Heart left ventricle (tissue), 16 donors: ENCODE measurements at regions of chr4 and their contacts with region 1.

Region 1: DNA sequence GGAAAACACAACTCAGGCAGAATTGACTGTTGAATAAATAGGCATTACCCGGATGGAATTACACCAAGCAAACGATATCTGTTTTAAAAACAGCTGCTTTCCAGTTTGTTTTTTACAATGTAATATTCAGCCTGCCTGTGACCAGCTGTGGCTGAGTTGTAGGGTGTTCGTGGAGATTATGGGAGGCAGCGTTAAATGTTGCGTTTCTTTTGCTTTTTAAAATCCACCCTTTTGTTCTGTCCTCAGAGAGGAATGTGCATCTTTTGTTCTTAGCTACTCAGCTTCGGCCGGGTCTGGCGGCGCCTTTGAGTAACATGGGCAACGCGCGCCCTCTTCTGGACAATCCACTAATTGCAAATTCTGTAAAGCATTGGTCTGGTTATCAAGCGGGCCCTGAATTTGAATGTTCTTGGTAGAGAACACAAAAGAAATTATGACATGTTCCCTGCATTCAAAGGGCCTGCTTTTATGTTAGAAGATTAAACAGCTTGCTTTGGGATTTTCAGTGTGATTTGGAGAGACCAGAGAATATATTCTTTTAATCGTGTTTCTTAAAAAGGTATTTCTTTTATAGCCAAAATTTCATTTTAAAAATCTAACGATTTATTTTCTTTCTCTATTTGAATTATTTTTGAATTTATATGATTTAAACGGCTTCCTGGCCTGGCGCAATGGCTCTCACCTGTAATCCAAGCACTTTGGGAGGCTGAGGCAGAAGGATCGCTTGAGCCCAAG is 76.3 kb upstream of the TRIM2 start:
- DNase-seq: peak; percentile 75 to 84 (median 81)
- ATAC-seq: peak; percentile 63 to 91 (median 84)
- H3K4me3 ChIP-seq: peak overlapping the region in 2 of 12 donors; percentile 11 to 32
- H3K27ac ChIP-seq: no peak overlapping the region
- H3K4me1 ChIP-seq: peaks cover 0 to 5% (median 0%) of the 10 kb centered on the region in 12 donors
- H3K27me3 ChIP-seq: no peaks in the 10 kb centered on the region
- CTCF ChIP-seq: peak; percentile 74 to 93 (median 84)
- POLR2A ChIP-seq: no peak

Region 2: DNA sequence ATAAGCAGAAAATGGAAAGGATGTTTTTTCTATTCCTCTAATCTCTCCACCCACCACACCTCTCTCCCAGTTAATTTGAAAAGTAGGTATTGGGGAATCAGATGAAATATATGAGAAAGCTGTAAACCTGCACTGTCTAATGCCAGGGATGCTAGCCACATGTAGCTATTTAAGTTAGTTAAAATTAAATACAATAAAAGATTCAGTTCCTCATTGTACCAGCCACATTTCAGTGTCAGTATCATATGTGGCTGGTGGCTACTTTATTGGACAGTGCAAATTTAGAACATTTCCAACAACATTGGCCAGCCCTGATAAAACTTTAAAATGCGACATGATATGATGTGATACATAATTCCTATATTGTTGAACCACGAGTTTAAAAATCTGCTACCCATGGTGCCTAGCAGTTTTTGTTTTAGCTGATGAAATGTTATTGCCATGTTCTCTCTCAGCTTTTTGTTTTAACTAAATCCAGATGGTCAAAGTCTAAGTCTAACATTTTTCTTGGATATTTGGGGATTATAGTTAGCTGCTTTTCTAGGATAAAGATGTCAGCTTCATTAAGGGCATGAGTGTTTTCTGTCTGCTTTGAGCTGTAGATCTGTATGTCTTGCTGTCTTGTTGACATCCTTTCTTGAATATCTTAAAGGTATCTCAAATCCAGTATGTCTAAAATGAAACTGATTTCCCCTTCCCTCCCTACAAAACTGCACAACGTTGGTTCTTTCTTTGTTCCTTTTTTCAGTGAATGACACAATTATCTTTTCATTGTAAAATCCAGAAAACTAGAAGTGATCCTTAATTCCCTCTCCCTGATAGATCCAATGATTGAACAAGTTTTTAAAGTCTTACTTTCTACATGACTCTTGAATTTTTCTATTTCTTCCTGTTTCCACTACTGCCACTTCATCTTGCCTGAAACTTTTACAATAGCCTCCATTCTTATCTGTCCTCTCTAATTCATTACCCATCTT is 342.0 kb before region 1 on chr4:
- intact Hi-C with region 1: no loop called
- DNase-seq: no peak
- ATAC-seq: no peak
- H3K4me3 ChIP-seq: no peak overlapping the region
- H3K27ac ChIP-seq: peak overlapping the region in 1 of 12 donors; percentile 25
- H3K4me1 ChIP-seq: peaks cover 0 to 58% (median 20%) of the 10 kb centered on the region in 12 donors
- H3K27me3 ChIP-seq: no peaks in the 10 kb centered on the region
- CTCF ChIP-seq: no peak
- POLR2A ChIP-seq: no peak

Region 3: DNA sequence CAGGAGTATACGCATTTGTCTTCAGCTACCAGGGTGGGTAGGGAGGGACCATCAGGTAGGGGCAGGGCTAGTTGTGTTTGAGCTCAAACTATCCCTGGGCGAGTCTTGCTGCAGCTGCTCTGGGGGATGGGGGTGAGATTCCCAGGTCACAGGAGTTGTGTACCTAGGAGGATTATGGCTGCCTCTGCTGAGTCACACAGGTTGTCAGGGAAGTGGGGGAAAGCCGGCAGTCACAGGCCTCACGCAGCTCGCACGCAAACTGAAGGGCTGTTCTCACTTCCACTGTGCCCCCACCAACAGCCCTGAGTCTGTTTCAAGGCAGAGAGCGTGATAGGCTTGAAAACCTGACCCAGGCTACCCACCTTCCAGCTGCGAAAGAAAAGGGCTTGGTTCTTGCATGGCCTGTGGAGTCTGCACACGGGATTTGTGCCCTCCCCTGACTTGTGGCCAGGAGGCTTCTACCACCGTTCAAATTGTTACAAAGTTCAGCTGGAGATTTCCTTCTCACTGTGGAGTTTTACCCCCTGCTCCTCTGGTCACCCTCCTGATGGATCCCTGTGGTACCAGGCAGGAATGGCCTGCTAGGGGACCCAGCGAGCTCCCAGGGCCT is 284.3 kb before region 1 on chr4:
- intact Hi-C with region 1: loop called (anchors 1 to 5 kb)
- DNase-seq: no peak
- ATAC-seq: no peak
- H3K4me3 ChIP-seq: no peak overlapping the region
- H3K27ac ChIP-seq: no peak overlapping the region
- H3K4me1 ChIP-seq: no peaks in the 10 kb centered on the region
- H3K27me3 ChIP-seq: no peaks in the 10 kb centered on the region
- CTCF ChIP-seq: no peak
- POLR2A ChIP-seq: no peak

Region 4: GRCh38 chr4:152850377-152850776 is 277.6 kb before region 1 on chr4:
- intact Hi-C with region 1: loop called in 8 of 10 experiments (anchors 1 to 5 kb)
- DNase-seq: peak in 3 of 5 donors; percentile 37 to 43 (median 42)
- ATAC-seq: peak; percentile 64 to 92 (median 83)
- H3K4me3 ChIP-seq: peak overlapping the region in 2 of 12 donors; percentile 0 to 10
- H3K27ac ChIP-seq: peak overlapping the region in 6 of 12 donors; percentile 32 to 51 (median 42)
- H3K4me1 ChIP-seq: peaks cover 0 to 18% (median 12%) of the 10 kb centered on the region in 12 donors
- H3K27me3 ChIP-seq: no peaks in the 10 kb centered on the region
- CTCF ChIP-seq: no peak
- POLR2A ChIP-seq: no peak

Region 5: GRCh38 chr4:153318696-153319320 is 190.9 kb after region 1 on chr4:
- intact Hi-C with region 1: no loop called
- DNase-seq: no peak
- ATAC-seq: peak in 3 of 4 donors; percentile 74 to 77 (median 77)
- H3K4me3 ChIP-seq: no peak overlapping the region
- H3K27ac ChIP-seq: no peak overlapping the region
- H3K4me1 ChIP-seq: no peaks in the 10 kb centered on the region
- H3K27me3 ChIP-seq: no peaks in the 10 kb centered on the region
- CTCF ChIP-seq: peak; percentile 53 to 81 (median 74)
- POLR2A ChIP-seq: no peak